GM10248 (cell line): ENCODE measurements at regions of chr2 and their contacts with region 1.

Region 1: GRCh38 chr2:196361606-196362326 is 190.4 kb upstream of the STK17B start:
- DNase-seq: no peak
- CTCF ChIP-seq: no peak

Region 2: GRCh38 chr2:196322973-196323810 is 38.6 kb before region 1 on chr2:
- CTCF ChIA-PET with region 1: no interaction called
- POLR2A ChIA-PET with region 1: no interaction called
- DNase-seq: no peak
- CTCF ChIP-seq: no peak

Region 3: DNA sequence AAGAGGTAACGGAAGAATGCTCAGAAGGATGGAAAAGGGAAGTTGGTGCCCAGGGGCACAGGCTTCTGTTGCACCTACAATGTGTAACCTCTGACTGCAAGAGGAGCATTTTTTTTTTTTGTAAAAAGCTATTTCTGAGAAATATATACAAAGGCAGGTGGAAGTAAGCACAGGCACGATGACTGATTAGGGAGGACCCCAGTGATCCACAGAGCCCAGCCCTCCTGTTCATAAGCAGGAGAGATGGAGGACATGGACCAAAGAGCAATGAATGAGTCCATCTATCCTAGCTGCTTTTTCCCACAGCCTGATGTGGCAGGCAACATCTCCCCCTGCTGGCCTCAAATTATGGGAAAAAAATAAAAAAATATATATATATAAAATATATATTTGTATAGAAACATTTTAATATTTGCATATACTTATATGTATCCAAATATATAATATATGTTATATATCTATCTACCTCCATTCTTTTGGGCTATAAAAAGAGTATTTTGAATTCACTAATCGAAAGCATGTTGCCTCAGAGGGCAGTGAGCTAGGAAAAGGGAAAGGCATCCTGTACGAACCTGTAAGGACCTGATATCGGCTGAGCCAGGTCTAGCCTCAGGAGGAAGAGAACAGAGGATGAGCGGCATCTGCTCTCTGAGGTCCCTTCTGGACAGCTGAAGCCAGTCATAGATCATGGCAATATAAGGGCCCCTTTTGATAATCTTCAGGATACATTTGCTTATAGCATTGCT is 24.4 kb before region 1 on chr2:
- CTCF ChIA-PET with region 1: interaction called, 39 read pairs
- POLR2A ChIA-PET with region 1: no interaction called
- DNase-seq: no peak
- CTCF ChIP-seq: no peak

Region 4: GRCh38 chr2:196376984-196377877 is 15.5 kb after region 1 on chr2:
- CTCF ChIA-PET with region 1: interaction called, 24 read pairs
- POLR2A ChIA-PET with region 1: interaction called, 4 read pairs
- DNase-seq: peak; percentile 21
- CTCF ChIP-seq: no peak